ENCODE measurements at regions of chr1 and their contacts with region 1.

Region 1: GRCh38 chr1:61255358-61255703 is 173.0 kb downstream of the NFIA start:
- DNase-seq: peak in 1 of 3 donors; percentile 85
- H3K4me3 ChIP-seq: peak overlapping the region in 5 of 7 experiments; percentile 3 to 78 (median 61)
- H3K27ac ChIP-seq: peak overlapping the region in 1 of 2 experiments; percentile 60
- H3K4me1 ChIP-seq: peaks cover 22 to 35% (median 29%) of the 10 kb centered on the region in 4 experiments
- H3K27me3 ChIP-seq: no peaks in the 10 kb centered on the region

Region 2: DNA sequence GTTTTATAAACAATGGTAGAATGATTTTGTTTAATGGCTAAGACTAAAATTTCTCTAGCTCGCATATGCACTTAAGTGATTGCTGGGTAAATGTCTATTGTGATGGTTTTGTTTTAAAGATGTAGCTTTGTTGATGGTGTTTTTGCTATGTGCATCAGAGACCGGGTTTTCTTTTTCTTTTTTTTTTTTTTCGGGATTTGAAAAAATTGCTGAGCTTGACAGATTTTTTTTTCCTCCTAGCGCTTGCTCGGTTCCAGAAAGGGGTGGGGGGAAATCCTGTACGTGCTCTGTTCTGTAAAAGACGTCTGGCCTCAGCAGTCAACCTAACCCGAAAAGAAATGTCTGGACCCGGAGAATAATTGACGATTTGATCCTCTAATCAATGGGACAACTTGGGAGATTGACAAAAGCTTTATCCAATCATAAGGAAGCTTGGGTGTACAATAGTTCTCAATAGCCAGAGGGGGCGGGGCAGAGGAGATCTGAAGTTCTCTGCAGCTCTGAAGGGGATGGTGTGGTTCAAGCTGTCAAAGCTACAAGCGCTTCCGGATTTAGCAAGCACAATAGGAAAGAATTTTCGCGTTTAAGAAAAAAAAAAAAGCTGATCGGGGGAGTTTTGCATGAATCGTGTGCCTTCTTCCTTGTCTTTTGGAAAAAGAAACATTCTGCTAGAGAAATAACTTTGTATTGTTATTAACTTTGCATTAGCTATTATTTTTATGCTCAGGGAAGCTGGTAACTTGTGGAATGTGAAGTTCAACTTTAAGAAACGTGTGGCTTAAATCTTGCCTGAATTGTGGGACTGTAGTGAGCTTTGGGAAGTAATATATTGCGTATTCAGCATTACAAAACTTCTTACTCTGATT is 177.4 kb before region 1 on chr1:
- CTCF ChIA-PET with region 1: no interaction called
- POLR2A ChIA-PET with region 1: no interaction called
- DNase-seq: peak; percentile 99
- H3K4me3 ChIP-seq: peak overlapping the region in 6 of 7 experiments; percentile 77 to 99 (median 84)
- H3K27ac ChIP-seq: peak overlapping the region; percentile 37 to 87
- H3K4me1 ChIP-seq: peaks cover 24 to 59% (median 46%) of the 10 kb centered on the region in 4 experiments
- H3K27me3 ChIP-seq: peaks cover 0 to 4% (median 0%) of the 10 kb centered on the region in 5 experiments

Region 3: DNA sequence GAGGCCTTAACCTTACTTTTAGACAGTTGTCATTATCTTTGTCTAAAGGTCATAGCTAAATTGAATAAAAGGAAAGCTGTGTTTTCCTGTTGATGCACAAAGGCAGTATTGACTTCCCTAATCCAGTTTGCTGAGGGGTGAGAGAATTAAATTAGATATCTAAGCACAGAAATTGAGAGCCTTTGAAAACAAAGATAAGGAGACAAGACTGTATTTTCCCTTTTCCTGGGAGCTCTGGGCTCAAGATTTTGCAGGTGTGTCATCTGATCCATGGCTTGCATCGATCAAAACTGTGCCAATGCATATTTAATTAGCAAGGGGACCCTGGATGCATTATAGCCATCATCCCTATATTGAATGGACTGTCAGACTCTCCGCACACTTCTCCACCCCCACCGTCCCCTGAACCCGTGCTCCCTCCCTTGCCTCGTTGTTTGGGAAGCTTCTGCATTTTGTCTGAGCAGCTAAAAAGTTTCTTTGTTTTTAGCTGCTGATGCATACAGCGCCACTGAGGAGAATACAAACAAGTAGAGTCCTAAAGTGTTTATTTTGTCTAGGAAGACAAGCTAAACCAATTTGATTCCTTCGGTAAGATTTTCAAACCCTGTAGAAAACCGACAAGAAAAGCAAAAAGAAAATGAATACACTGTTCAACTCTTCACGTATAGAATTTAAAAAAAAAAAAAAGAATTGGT is 13.4 kb after region 1 on chr1:
- CTCF ChIA-PET with region 1: interaction called, 14 read pairs
- POLR2A ChIA-PET with region 1: interaction called, 3 read pairs
- DNase-seq: no peak
- H3K4me3 ChIP-seq: no peak overlapping the region
- H3K27ac ChIP-seq: no peak overlapping the region
- H3K4me1 ChIP-seq: peaks cover 0 to 7% (median 3%) of the 10 kb centered on the region in 4 experiments
- H3K27me3 ChIP-seq: no peaks in the 10 kb centered on the region

Measured in common myeloid progenitor, CD34-positive (primary cell).